ENCODE measurements at regions of chr4 and their contacts with region 1.

Region 1: GRCh38 chr4:151540728-151541422 is 131.9 kb downstream of the FHIP1A start:
- DNase-seq: peak; percentile 99
- H3K4me3 ChIP-seq: peak overlapping the region; percentile 7 to 17 (median 12)
- H3K27ac ChIP-seq: peak overlapping the region; percentile 100
- H3K4me1 ChIP-seq: peaks cover 36% of the 10 kb centered on the region
- H3K27me3 ChIP-seq: no peaks in the 10 kb centered on the region
- CTCF ChIP-seq: no peak

Region 2: GRCh38 chr4:151355155-151355554 is 185.7 kb before region 1 on chr4:
- CTCF ChIA-PET with region 1: no interaction called
- dilution Hi-C with region 1: no loop called
- in situ Hi-C with region 1: no loop called
- intact Hi-C with region 1: no loop called
- DNase-seq: peak; percentile 53
- H3K4me3 ChIP-seq: no peak overlapping the region
- H3K27ac ChIP-seq: no peak overlapping the region
- H3K4me1 ChIP-seq: peaks cover 20% of the 10 kb centered on the region
- H3K27me3 ChIP-seq: no peaks in the 10 kb centered on the region
- CTCF ChIP-seq: no peak

Region 3: GRCh38 chr4:151581570-151581969 is 40.7 kb after region 1 on chr4:
- CTCF ChIA-PET with region 1: interaction called, 3 read pairs
- dilution Hi-C with region 1: no loop called
- in situ Hi-C with region 1: no loop called
- intact Hi-C with region 1: loop called (anchors 5 kb)
- DNase-seq: no peak
- H3K4me3 ChIP-seq: no peak overlapping the region
- H3K27ac ChIP-seq: no peak overlapping the region
- H3K4me1 ChIP-seq: peaks cover 11% of the 10 kb centered on the region
- H3K27me3 ChIP-seq: no peaks in the 10 kb centered on the region
- CTCF ChIP-seq: no peak

Measured in mammary epithelial cell (primary cell).